ENCODE measurements at regions of chr19 and their contacts with region 1.

Region 1: GRCh38 chr19:12666265-12667048 is at the starts of genes MAN2B1 and WDR83:
- DNase-seq: peak; percentile 84
- H3K4me3 Mint-ChIP-seq: peak within 1 kb of the TSS; percentile 95
- H3K27ac Mint-ChIP-seq: peak within 1 kb of the TSS; percentile 93
- H3K4me1 Mint-ChIP-seq: peaks cover 47% of the 10 kb centered on the region
- H3K27me3 Mint-ChIP-seq: no peaks in the 10 kb centered on the region
- total RNA-seq, gene MAN2B1: 120 to 131 TPM
- total RNA-seq, gene WDR83: 14.9 to 16.2 TPM

Region 2: GRCh38 chr19:12092065-12092867 is 574.2 kb before region 1 on chr19:
- CTCF ChIA-PET with region 1: no interaction called
- intact Hi-C with region 1: loop called (anchors 5 kb)
- DNase-seq: peak; percentile 86
- H3K4me3 Mint-ChIP-seq: peak overlapping the region; percentile 83
- H3K27ac Mint-ChIP-seq: peak overlapping the region; percentile 73
- H3K4me1 Mint-ChIP-seq: peaks cover 6% of the 10 kb centered on the region
- H3K27me3 Mint-ChIP-seq: peaks cover 14% of the 10 kb centered on the region

Region 3: GRCh38 chr19:12194827-12195731 is 471.4 kb before region 1 on chr19:
- CTCF ChIA-PET with region 1: no interaction called
- intact Hi-C with region 1: loop called (anchors 10 kb)
- DNase-seq: peak; percentile 86
- H3K4me3 Mint-ChIP-seq: peak overlapping the region; percentile 80
- H3K27ac Mint-ChIP-seq: peak overlapping the region; percentile 59
- H3K4me1 Mint-ChIP-seq: peaks cover 24% of the 10 kb centered on the region
- H3K27me3 Mint-ChIP-seq: no peaks in the 10 kb centered on the region

Region 4: GRCh38 chr19:12294249-12295158 is 372.0 kb before region 1 on chr19 and contains the start of gene ZNF44:
- CTCF ChIA-PET with region 1: no interaction called
- intact Hi-C with region 1: loop called (anchors 10 kb)
- DNase-seq: peak; percentile 99
- H3K4me3 Mint-ChIP-seq: peak within 1 kb of the TSS; percentile 98
- H3K27ac Mint-ChIP-seq: peak within 1 kb of the TSS; percentile 96
- H3K4me1 Mint-ChIP-seq: peaks cover 31% of the 10 kb centered on the region
- H3K27me3 Mint-ChIP-seq: no peaks in the 10 kb centered on the region
- total RNA-seq, gene ZNF44: 5.9 to 6.3 TPM

Region 5: DNA sequence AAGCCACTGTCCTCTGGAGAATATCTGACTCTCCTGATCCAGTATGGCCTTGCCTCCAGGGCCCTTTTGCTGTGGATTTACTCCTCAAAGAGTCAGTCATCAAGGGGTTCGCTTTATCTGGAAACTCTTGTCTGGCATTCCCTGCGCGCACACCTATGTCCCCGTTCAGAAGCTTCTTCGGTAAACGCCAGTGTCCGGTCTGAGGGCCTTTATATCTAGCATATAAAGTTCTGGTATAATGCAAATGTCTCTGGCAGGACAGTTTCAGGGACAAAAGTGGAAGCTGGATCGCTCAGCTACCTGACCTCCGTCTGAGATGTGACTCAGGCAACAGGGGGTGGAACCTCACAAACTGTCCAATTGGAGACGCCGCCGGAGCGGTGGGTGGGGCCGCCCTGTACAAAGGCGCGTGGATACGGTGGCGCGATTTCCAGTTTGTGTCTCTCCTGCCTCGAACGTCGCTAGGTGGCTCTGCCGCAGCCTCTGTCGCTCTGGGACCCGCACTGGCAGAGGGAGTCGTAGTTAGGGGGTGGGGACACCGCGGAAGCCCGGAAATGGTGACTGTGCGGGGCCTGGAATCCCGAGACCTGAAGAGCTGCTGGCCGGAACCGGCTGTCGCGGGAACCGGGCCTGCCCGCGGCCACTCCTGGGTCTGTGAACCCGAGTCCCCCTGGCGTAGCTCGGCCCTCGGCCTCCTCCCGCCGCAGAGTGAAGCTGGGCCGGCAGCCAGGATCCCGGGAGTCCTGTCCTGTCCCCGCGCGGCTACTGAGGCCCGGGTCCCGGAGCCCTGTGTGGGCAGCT is 171.3 kb before region 1 on chr19:
- CTCF ChIA-PET with region 1: no interaction called
- intact Hi-C with region 1: loop called (anchors 1 kb)
- DNase-seq: peak; percentile 98
- H3K4me3 Mint-ChIP-seq: peak overlapping the region; percentile 87
- H3K27ac Mint-ChIP-seq: peak overlapping the region; percentile 89
- H3K4me1 Mint-ChIP-seq: peaks cover 9% of the 10 kb centered on the region
- H3K27me3 Mint-ChIP-seq: no peaks in the 10 kb centered on the region

Region 6: GRCh38 chr19:12610540-12611360 is 55.7 kb before region 1 on chr19 and contains the starts of genes ZNF490 and ZNF791:
- CTCF ChIA-PET with region 1: interaction called, 4 read pairs
- intact Hi-C with region 1: loop called (anchors 1 kb)
- DNase-seq: peak; percentile 99
- H3K4me3 Mint-ChIP-seq: peak within 1 kb of the TSS; percentile 100
- H3K27ac Mint-ChIP-seq: peak within 1 kb of the TSS; percentile 95
- H3K4me1 Mint-ChIP-seq: peaks cover 43% of the 10 kb centered on the region
- H3K27me3 Mint-ChIP-seq: no peaks in the 10 kb centered on the region
- total RNA-seq, gene ZNF490: 3.9 to 5.0 TPM
- total RNA-seq, gene ZNF791: 11.2 to 11.9 TPM

Region 7: GRCh38 chr19:12639901-12640613 is 26.4 kb before region 1 on chr19:
- CTCF ChIA-PET with region 1: interaction called, 5 read pairs
- intact Hi-C with region 1: loop called (anchors 1 kb)
- DNase-seq: peak; percentile 94
- H3K4me3 Mint-ChIP-seq: peak overlapping the region; percentile 68
- H3K27ac Mint-ChIP-seq: peak overlapping the region; percentile 54
- H3K4me1 Mint-ChIP-seq: peaks cover 24% of the 10 kb centered on the region
- H3K27me3 Mint-ChIP-seq: no peaks in the 10 kb centered on the region

Region 8: GRCh38 chr19:13150187-13150930 is 483.9 kb after region 1 on chr19 and contains the starts of genes IER2 and STX10:
- CTCF ChIA-PET with region 1: no interaction called
- intact Hi-C with region 1: no loop called
- DNase-seq: peak; percentile 96
- H3K4me3 Mint-ChIP-seq: peak within 1 kb of the TSS; percentile 99
- H3K27ac Mint-ChIP-seq: peak within 1 kb of the TSS; percentile 98
- H3K4me1 Mint-ChIP-seq: peaks cover 19% of the 10 kb centered on the region
- H3K27me3 Mint-ChIP-seq: no peaks in the 10 kb centered on the region
- total RNA-seq, gene IER2: 120 to 123 TPM
- total RNA-seq, gene STX10: 48.3 to 48.9 TPM

Measured in activated naive CD4-positive, alpha-beta T cell treated with anti-CD3 and anti-CD28 coated beads for 36 hours (primary cell).